ENCODE measurements at regions of chr6 and their contacts with region 1.

Region 1: GRCh38 chr6:25278914-25279747 is at the start of gene CARMIL1:
- DNase-seq: peak; percentile 44 to 87 (median 63)
- ATAC-seq: peak; percentile 70
- H3K4me3 ChIP-seq: peak within 1 kb of the TSS; percentile 64
- H3K4me3 Mint-ChIP-seq: peak within 1 kb of the TSS; percentile 93
- H3K27ac ChIP-seq: peak within 1 kb of the TSS; percentile 1 to 53
- H3K27ac Mint-ChIP-seq: peak within 1 kb of the TSS; percentile 79
- H3K4me1 ChIP-seq: peaks cover 16% of the 10 kb centered on the region
- H3K4me1 Mint-ChIP-seq: peaks cover 47% of the 10 kb centered on the region
- H3K27me3 ChIP-seq: no peaks in the 10 kb centered on the region
- H3K27me3 Mint-ChIP-seq: peaks cover 1% of the 10 kb centered on the region
- CTCF ChIP-seq: peak; percentile 75
- total RNA-seq, gene CARMIL1: 3.9 to 4.7 TPM

Region 2: DNA sequence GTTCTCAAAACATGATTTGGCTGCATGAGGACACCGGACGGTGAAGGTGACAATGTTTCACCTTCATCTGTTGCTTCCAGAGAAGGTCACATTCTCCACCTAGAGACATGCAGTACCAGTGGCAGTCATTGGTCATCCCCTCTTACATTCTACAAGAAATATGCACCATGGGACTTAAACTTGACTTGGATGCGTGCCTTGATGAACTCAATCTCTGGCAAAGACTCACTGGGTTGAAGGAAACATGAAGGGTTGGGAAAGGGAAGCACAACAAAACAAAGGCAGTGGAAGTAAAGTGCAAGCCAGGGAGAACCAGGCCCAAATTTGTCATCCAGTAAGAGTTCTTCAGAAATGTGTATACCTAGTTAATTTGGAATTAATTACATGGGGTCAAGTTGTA is 441.1 kb before region 1 on chr6:
- CTCF ChIA-PET with region 1: no interaction called
- POLR2A ChIA-PET with region 1: no interaction called
- intact Hi-C with region 1: no loop called
- DNase-seq: no peak
- ATAC-seq: no peak
- H3K4me3 ChIP-seq: no peak overlapping the region
- H3K4me3 Mint-ChIP-seq: no peak overlapping the region
- H3K27ac ChIP-seq: peak overlapping the region in 1 of 2 donors; percentile 5
- H3K27ac Mint-ChIP-seq: peak overlapping the region; percentile 90
- H3K4me1 ChIP-seq: peaks cover 39% of the 10 kb centered on the region
- H3K4me1 Mint-ChIP-seq: peaks cover 81% of the 10 kb centered on the region
- H3K27me3 ChIP-seq: no peaks in the 10 kb centered on the region
- H3K27me3 Mint-ChIP-seq: no peaks in the 10 kb centered on the region
- CTCF ChIP-seq: no peak

Region 3: DNA sequence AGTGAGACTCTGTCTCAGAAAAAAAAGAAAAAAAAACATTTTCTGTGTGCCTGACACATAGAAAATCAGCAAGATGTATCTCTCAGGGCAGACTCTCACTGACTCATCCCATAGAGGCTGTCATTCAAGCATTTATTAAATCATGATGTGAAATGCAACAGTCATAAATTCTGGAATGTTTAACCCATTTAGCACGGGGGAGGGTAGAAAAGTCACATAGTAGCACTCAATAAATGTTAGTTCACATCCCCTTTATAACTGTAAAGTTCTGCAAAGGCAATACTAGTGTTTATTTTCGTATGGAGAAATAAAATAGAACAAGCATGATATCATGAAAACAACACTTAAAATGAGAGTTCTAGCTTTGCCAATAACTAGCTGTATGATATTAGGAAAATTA is 15.5 kb before region 1 on chr6:
- CTCF ChIA-PET with region 1: interaction called, 27 read pairs
- POLR2A ChIA-PET with region 1: interaction called, 11 read pairs
- intact Hi-C with region 1: no loop called
- DNase-seq: no peak
- ATAC-seq: no peak
- H3K4me3 ChIP-seq: no peak overlapping the region
- H3K4me3 Mint-ChIP-seq: no peak overlapping the region
- H3K27ac ChIP-seq: no peak overlapping the region
- H3K27ac Mint-ChIP-seq: no peak overlapping the region
- H3K4me1 ChIP-seq: no peaks in the 10 kb centered on the region
- H3K4me1 Mint-ChIP-seq: peaks cover 4% of the 10 kb centered on the region
- H3K27me3 ChIP-seq: no peaks in the 10 kb centered on the region
- H3K27me3 Mint-ChIP-seq: peaks cover 6% of the 10 kb centered on the region
- CTCF ChIP-seq: no peak

Region 4: GRCh38 chr6:25359191-25359861 is 80.2 kb after region 1 on chr6:
- CTCF ChIA-PET with region 1: no interaction called
- POLR2A ChIA-PET with region 1: no interaction called
- intact Hi-C with region 1: no loop called
- DNase-seq: no peak
- ATAC-seq: no peak
- H3K4me3 ChIP-seq: no peak overlapping the region
- H3K4me3 Mint-ChIP-seq: no peak overlapping the region
- H3K27ac ChIP-seq: no peak overlapping the region
- H3K27ac Mint-ChIP-seq: no peak overlapping the region
- H3K4me1 ChIP-seq: no peaks in the 10 kb centered on the region
- H3K4me1 Mint-ChIP-seq: peaks cover 6% of the 10 kb centered on the region
- H3K27me3 ChIP-seq: no peaks in the 10 kb centered on the region
- H3K27me3 Mint-ChIP-seq: no peaks in the 10 kb centered on the region
- CTCF ChIP-seq: no peak

Region 5: DNA sequence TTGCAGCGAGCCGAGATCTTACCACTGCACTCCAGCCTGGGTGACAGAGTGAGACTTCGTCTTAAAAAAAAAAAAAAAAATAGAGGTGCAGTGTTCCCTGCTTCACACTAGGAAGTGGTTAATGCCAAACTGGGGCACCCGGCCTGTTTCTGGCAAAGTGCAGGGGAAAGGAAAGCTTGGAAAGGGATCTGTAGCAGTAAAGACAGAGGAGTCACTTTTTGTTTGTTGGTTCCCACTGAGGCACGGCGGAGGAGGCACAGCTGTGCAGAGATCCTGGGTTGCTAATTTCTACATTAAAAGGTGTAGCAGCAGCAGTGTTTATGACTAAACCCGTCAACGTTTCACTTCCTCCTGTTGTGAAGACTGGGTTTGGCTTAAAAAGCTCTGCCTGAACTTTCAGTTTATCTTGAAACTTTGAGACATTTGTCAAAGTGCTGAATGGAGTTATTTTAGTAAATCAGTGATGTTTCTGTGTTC is 125.6 kb after region 1 on chr6:
- CTCF ChIA-PET with region 1: no interaction called
- POLR2A ChIA-PET with region 1: interaction called, 19 read pairs
- intact Hi-C with region 1: no loop called
- DNase-seq: peak; percentile 3 to 66 (median 23)
- ATAC-seq: peak; percentile 85
- H3K4me3 ChIP-seq: peak overlapping the region; percentile 50
- H3K4me3 Mint-ChIP-seq: no peak overlapping the region
- H3K27ac ChIP-seq: peak overlapping the region; percentile 70 to 72
- H3K27ac Mint-ChIP-seq: no peak overlapping the region
- H3K4me1 ChIP-seq: peaks cover 47% of the 10 kb centered on the region
- H3K4me1 Mint-ChIP-seq: no peaks in the 10 kb centered on the region
- H3K27me3 ChIP-seq: no peaks in the 10 kb centered on the region
- H3K27me3 Mint-ChIP-seq: no peaks in the 10 kb centered on the region
- CTCF ChIP-seq: no peak

Region 6: DNA sequence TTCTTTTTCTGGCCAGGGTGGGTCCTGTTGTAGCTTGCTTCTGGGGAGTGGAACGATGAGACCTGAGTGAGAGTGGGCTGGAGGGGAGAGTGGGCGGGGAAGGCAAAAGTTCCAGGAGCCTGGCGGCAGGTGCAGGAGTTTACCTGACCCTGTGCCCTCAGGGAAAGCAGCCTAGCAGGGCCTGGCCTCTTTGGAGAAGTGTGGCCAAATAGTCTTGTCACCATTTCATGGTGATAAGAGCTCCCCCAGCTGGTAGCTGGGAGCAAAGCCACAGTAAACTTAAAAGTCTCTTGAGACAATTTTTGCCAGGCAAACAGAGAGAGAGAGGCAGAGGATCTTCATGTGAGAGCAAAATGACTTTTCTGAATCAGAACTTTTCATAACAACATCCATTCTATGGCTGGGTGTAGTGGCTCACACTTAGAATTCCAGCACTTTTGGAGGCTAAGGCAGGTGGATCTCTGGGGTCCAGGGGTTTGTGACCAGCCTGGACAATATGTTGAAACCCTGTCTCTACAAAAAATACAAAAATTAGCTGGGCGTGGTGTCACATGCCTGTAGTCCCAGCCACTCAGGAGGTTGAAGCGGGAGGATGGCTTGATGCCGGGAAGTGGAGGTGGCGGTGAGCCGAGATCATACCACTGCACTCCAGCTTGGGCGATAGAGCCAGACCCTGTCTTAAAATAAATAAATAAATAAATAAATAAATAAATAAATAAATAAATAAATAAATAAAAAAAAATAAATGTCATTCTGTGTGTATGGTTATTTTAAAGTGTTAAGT is 211.1 kb after region 1 on chr6:
- CTCF ChIA-PET with region 1: interaction called, 20 read pairs
- POLR2A ChIA-PET with region 1: interaction called, 34 read pairs
- intact Hi-C with region 1: loop called (anchors 1 kb)
- DNase-seq: peak; percentile 39 to 82 (median 58)
- ATAC-seq: peak; percentile 82
- H3K4me3 ChIP-seq: no peak overlapping the region
- H3K4me3 Mint-ChIP-seq: no peak overlapping the region
- H3K27ac ChIP-seq: no peak overlapping the region
- H3K27ac Mint-ChIP-seq: peak overlapping the region; percentile 8
- H3K4me1 ChIP-seq: peaks cover 7% of the 10 kb centered on the region
- H3K4me1 Mint-ChIP-seq: peaks cover 8% of the 10 kb centered on the region
- H3K27me3 ChIP-seq: no peaks in the 10 kb centered on the region
- H3K27me3 Mint-ChIP-seq: no peaks in the 10 kb centered on the region
- CTCF ChIP-seq: peak; percentile 88

Region 7: DNA sequence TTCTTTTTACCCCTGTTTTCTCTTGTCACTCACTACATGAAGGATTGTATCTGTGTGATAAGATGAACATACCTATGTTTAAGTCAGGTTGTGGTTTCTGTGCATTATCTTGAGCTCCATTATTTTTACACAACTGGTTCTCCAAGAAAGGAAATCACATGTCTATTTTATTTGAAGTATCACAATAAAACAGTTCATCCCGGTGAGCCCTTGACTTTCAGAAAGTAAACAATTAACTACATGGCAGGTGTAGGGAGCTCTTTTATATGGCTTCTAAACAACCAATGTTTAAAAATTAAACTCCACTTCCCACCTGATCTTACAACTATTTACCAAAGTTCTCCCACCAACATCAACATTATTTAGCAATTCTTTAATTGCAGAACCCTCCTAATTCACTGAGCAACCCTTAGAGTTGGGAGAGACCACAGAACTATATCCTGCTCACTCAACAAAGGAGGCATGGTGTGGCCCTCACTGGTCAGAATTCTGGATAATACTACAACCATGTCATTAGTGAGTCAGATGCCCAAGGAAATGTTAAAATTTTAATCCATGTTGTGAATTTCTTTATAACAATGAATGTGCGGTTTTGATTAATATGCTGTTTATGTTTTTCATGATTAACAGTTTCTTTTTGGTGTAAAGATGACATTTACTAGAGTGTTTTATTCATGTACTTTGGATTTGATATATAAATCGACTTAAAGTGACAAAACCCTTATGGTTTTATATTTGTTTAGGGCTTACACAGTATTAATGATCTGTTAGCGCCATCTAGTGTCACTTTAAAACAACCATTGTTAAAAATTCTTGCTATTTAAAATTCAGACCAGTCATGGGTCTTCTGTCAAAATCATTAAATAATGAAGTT is 322.9 kb after region 1 on chr6:
- CTCF ChIA-PET with region 1: interaction called, 11 read pairs
- POLR2A ChIA-PET with region 1: interaction called, 3 read pairs
- intact Hi-C with region 1: no loop called
- DNase-seq: peak in 3 of 14 experiments; percentile 55 to 75 (median 69)
- ATAC-seq: no peak
- H3K4me3 ChIP-seq: no peak overlapping the region
- H3K4me3 Mint-ChIP-seq: no peak overlapping the region
- H3K27ac ChIP-seq: no peak overlapping the region
- H3K27ac Mint-ChIP-seq: no peak overlapping the region
- H3K4me1 ChIP-seq: no peaks in the 10 kb centered on the region
- H3K4me1 Mint-ChIP-seq: peaks cover 5% of the 10 kb centered on the region
- H3K27me3 ChIP-seq: no peaks in the 10 kb centered on the region
- H3K27me3 Mint-ChIP-seq: no peaks in the 10 kb centered on the region
- CTCF ChIP-seq: peak; percentile 81

Region 8: GRCh38 chr6:25899123-25899522 is 620.0 kb after region 1 on chr6:
- CTCF ChIA-PET with region 1: no interaction called
- POLR2A ChIA-PET with region 1: no interaction called
- intact Hi-C with region 1: no loop called
- DNase-seq: no peak
- ATAC-seq: no peak
- H3K4me3 ChIP-seq: no peak overlapping the region
- H3K4me3 Mint-ChIP-seq: no peak overlapping the region
- H3K27ac ChIP-seq: no peak overlapping the region
- H3K27ac Mint-ChIP-seq: no peak overlapping the region
- H3K4me1 ChIP-seq: no peaks in the 10 kb centered on the region
- H3K4me1 Mint-ChIP-seq: no peaks in the 10 kb centered on the region
- H3K27me3 ChIP-seq: no peaks in the 10 kb centered on the region
- H3K27me3 Mint-ChIP-seq: peaks cover 13% of the 10 kb centered on the region
- CTCF ChIP-seq: no peak